ENCODE measurements at regions of chrX and their contacts with region 1.

Region 1: GRCh38 chrX:72018277-72019112 is 107.8 kb downstream of the NHSL2 start:
- DNase-seq: peak; percentile 72
- H3K4me3 Mint-ChIP-seq: no peak overlapping the region
- H3K27ac Mint-ChIP-seq: no peak overlapping the region
- H3K4me1 Mint-ChIP-seq: no peaks in the 10 kb centered on the region
- H3K27me3 Mint-ChIP-seq: peaks cover 96% of the 10 kb centered on the region
- CTCF ChIP-seq: peak; percentile 69

Region 2: GRCh38 chrX:71998836-71999509 is 19.5 kb before region 1 on chrX:
- CTCF ChIA-PET with region 1: interaction called, 17 read pairs
- POLR2A ChIA-PET with region 1: interaction called, 4 read pairs
- intact Hi-C with region 1: no loop called
- DNase-seq: peak; percentile 55
- H3K4me3 Mint-ChIP-seq: no peak overlapping the region
- H3K27ac Mint-ChIP-seq: no peak overlapping the region
- H3K4me1 Mint-ChIP-seq: no peaks in the 10 kb centered on the region
- H3K27me3 Mint-ChIP-seq: peaks cover 95% of the 10 kb centered on the region
- CTCF ChIP-seq: peak; percentile 64

Region 3: GRCh38 chrX:72029483-72030411 is 11.3 kb after region 1 on chrX:
- CTCF ChIA-PET with region 1: interaction called, 53 read pairs
- POLR2A ChIA-PET with region 1: no interaction called
- intact Hi-C with region 1: no loop called
- DNase-seq: peak; percentile 73
- H3K4me3 Mint-ChIP-seq: no peak overlapping the region
- H3K27ac Mint-ChIP-seq: no peak overlapping the region
- H3K4me1 Mint-ChIP-seq: peaks cover 10% of the 10 kb centered on the region
- H3K27me3 Mint-ChIP-seq: peaks cover 80% of the 10 kb centered on the region
- CTCF ChIP-seq: no peak

Region 4: DNA sequence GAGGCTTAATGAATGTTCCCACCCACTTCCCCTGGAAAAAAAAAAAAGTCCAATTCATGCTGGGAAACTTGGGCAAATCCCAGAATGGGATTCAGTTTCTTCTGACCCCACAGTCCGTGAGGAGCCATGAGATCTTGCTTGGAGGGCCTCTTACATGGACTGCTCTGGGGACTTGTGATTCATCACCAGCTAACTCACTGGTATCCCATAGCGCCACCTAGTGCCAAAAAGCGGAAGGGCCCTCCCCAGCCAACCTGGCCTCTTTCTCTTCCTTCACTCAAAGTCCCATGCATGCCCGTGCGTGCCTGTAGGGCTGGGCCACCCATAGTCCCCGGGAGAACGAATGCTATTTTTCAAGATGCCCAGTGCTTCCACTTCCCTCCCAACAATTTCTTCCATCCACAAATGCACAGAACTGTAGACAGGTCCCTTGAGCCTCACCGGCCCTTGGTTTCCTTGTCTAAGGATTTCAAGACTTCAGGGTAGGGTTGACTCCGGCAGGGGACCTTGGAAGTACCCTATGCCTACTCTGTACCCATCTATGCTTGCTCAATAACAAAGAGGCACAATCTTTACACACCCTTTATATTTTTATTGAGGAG is 108.1 kb after region 1 on chrX:
- CTCF ChIA-PET with region 1: interaction called, 31 read pairs
- POLR2A ChIA-PET with region 1: interaction called, 3 read pairs
- intact Hi-C with region 1: loop called (anchors 1 kb)
- DNase-seq: peak; percentile 85
- H3K4me3 Mint-ChIP-seq: no peak overlapping the region
- H3K27ac Mint-ChIP-seq: no peak overlapping the region
- H3K4me1 Mint-ChIP-seq: peaks cover 10% of the 10 kb centered on the region
- H3K27me3 Mint-ChIP-seq: peaks cover 69% of the 10 kb centered on the region
- CTCF ChIP-seq: peak; percentile 92